ENCODE measurements at regions of chr15 and their contacts with region 1.

Region 1: GRCh38 chr15:77402740-77403379 is 17.0 kb downstream of the PEAK1 start:
- DNase-seq: no peak
- H3K4me3 Mint-ChIP-seq: no peak overlapping the region
- H3K27ac Mint-ChIP-seq: no peak overlapping the region
- H3K4me1 Mint-ChIP-seq: peaks cover 17% of the 10 kb centered on the region
- H3K27me3 Mint-ChIP-seq: no peaks in the 10 kb centered on the region
- CTCF ChIP-seq: no peak

Region 2: DNA sequence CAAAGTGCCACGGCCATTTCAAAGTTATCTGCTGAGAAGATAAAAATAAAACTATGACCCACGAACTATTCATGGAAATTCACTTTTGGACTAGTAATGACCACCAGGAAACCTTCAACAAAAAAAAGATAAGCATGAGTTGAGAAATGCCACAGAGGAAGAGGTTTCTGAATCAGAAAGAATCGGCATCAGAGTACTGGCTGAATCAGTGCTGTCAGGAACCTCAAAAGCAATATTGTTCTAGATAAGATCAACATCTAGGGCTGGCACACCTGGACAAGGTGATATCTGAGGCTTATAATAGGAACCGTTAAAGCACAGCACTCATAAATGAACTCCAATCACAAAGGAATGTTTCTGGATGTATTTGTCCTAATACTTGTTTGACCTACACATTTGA is 55.7 kb before region 1 on chr15:
- CTCF ChIA-PET with region 1: no interaction called
- intact Hi-C with region 1: loop called (anchors 5 kb)
- DNase-seq: no peak
- H3K4me3 Mint-ChIP-seq: peak overlapping the region; percentile 60
- H3K27ac Mint-ChIP-seq: peak overlapping the region; percentile 86
- H3K4me1 Mint-ChIP-seq: peaks cover 35% of the 10 kb centered on the region
- H3K27me3 Mint-ChIP-seq: no peaks in the 10 kb centered on the region
- CTCF ChIP-seq: no peak

Region 3: DNA sequence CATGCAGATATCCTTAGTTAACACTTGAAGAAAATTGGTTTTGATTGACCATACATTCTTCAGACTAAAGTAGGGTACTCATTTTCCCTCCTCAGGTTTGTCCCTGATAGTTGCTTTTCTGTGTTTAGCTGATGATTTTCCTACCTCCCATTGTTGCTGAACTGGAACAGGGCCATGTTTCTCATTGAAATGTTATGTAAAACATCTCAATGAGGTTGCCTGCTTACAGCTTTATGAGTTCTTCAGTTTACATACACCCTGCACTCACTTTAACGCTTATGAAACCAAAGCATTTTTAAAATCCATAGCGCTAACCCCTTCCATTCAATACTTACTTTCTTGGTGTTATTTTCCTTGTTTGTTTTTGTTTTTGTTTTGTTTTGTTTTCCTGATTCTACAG is 79.7 kb after region 1 on chr15:
- CTCF ChIA-PET with region 1: no interaction called
- intact Hi-C with region 1: no loop called
- DNase-seq: no peak
- H3K4me3 Mint-ChIP-seq: no peak overlapping the region
- H3K27ac Mint-ChIP-seq: no peak overlapping the region
- H3K4me1 Mint-ChIP-seq: no peaks in the 10 kb centered on the region
- H3K27me3 Mint-ChIP-seq: no peaks in the 10 kb centered on the region
- CTCF ChIP-seq: no peak

Measured in Calu3 (cell line).